Ascending aorta (tissue), 2 donors: ENCODE measurements at regions of chr7 and their contacts with region 1.

Region 1: GRCh38 chr7:35714862-35715261 is 19.9 kb upstream of the HERPUD2 start:
- DNase-seq: no peak
- H3K4me3 ChIP-seq: no peak overlapping the region
- H3K27ac ChIP-seq: no peak overlapping the region
- H3K4me1 ChIP-seq: peaks cover 0 to 9% of the 10 kb centered on the region in 2 donors
- H3K27me3 ChIP-seq: no peaks in the 10 kb centered on the region
- CTCF ChIP-seq: no peak

Region 2: DNA sequence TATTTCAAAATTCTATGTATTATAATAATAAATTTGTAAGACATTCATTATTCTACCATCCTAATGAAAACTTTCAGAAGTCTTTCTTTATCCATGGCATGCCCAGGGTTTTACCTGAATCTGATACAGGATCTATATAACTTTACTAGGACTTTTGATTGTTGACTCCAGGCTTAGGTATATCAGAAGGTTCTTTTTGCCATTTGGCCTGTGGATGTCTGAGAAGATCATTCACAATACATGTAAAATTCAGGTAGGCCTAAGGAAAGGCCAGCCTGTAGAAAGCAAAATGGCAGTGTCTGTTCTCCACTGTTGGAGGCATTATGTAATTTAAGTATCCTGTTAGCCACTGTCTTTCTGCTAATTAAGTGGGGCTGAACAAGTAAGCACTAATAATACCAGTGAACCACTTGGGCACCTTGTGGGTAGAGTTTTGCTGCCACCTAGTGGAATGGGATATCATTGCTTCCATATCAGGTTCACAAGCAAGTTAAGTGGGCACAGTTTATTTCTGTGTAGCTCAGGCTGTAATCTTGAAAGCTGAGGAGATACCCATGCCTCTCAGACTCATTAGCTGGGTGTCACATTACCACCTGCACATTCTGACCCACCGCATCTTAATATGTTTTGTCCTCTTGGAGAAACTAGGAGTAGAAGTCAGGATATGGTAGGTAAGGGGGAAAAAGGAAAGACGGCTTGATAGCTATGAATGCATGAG is 191.5 kb after region 1 on chr7:
- intact Hi-C with region 1: loop called (anchors 1 kb)
- DNase-seq: peak in 1 of 2 donors; percentile 75
- H3K4me3 ChIP-seq: no peak overlapping the region
- H3K27ac ChIP-seq: no peak overlapping the region
- H3K4me1 ChIP-seq: peaks cover 0 to 2% of the 10 kb centered on the region in 2 donors
- H3K27me3 ChIP-seq: no peaks in the 10 kb centered on the region
- CTCF ChIP-seq: peak; percentile 84 to 92 (median 86)